ENCODE measurements at regions of chr2 and their contacts with region 1.

Region 1: GRCh38 chr2:169741-170140 is 94.1 kb downstream of the SH3YL1 start:
- DNase-seq: no peak
- ATAC-seq: no peak

Region 2: GRCh38 chr2:290090-290722 is 120.5 kb after region 1 on chr2:
- intact Hi-C with region 1: loop called (anchors 5 kb)
- DNase-seq: peak; percentile 81
- ATAC-seq: peak; percentile 94

Measured in Right ventricle myocardium superior (tissue), 1 donor.